Heart left ventricle (tissue), 16 donors: ENCODE measurements at regions of chr20 and their contacts with region 1.

Region 1: DNA sequence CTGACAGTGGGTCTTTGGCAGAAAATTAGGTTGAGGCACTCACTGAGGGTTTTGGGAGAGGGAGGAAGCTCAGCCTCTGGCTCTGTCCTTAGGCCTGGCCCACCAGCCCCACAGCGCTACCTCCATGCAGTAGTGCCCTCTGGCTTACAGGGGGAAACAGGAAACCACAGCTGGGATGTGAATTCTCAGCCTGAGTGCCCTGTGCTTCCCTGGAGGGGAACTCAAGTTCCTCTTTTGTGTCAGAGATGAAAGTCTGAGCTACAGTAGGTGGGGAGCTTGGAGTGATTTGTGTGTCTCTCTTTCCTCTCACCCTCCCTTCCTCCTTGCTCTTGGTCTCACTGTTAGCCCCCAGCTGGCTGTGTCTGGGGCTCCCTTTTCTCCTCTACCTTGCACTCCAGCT is 48.2 kb upstream of the BLCAP start:
- DNase-seq: no peak
- ATAC-seq: no peak
- H3K4me3 ChIP-seq: no peak overlapping the region
- H3K27ac ChIP-seq: no peak overlapping the region
- H3K4me1 ChIP-seq: no peaks in the 10 kb centered on the region
- H3K27me3 ChIP-seq: peaks cover 0 to 26% (median 1%) of the 10 kb centered on the region in 9 donors
- CTCF ChIP-seq: no peak
- POLR2A ChIP-seq: no peak

Region 2: DNA sequence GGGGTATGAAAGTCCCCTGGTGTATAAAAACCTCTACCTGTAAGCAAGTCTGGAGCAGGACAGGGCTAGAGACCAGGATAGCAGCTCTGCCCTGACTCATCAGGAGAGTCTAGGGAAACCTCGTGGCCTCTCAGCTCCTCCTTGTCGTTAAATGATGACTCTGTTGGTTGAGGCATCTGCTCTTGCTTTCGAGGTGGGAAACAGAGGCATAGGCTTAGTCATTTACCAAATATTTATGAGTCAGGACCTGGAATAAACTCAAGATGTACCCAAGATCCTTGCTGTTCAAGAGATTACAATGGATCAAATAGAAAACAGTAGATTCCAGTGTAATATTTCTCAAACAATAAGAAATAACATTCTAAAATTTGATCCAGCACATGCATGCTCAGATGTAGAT is 280.9 kb before region 1 on chr20:
- intact Hi-C with region 1: no loop called
- DNase-seq: no peak
- ATAC-seq: peak in 1 of 4 donors; percentile 53
- H3K4me3 ChIP-seq: no peak overlapping the region
- H3K27ac ChIP-seq: peak overlapping the region in 2 of 12 donors; percentile 81 to 87
- H3K4me1 ChIP-seq: peaks cover 0 to 88% (median 26%) of the 10 kb centered on the region in 12 donors
- H3K27me3 ChIP-seq: no peaks in the 10 kb centered on the region
- CTCF ChIP-seq: no peak
- POLR2A ChIP-seq: no peak

Region 3: GRCh38 chr20:37527638-37528441 is 48.0 kb before region 1 on chr20 and contains the start of gene BLCAP:
- intact Hi-C with region 1: no loop called
- DNase-seq: peak; percentile 90 to 96 (median 93)
- ATAC-seq: peak; percentile 86 to 93 (median 92)
- H3K4me3 ChIP-seq: peak within 1 kb of the TSS; percentile 76 to 100 (median 94)
- H3K27ac ChIP-seq: peak within 1 kb of the TSS; percentile 87 to 100 (median 98)
- H3K4me1 ChIP-seq: peaks cover 3 to 50% (median 40%) of the 10 kb centered on the region in 12 donors
- H3K27me3 ChIP-seq: no peaks in the 10 kb centered on the region
- CTCF ChIP-seq: no peak
- POLR2A ChIP-seq: peak; percentile 54 to 85
- total RNA-seq, gene BLCAP: 67.1 to 95.8 (median 81.7) TPM

Region 4: DNA sequence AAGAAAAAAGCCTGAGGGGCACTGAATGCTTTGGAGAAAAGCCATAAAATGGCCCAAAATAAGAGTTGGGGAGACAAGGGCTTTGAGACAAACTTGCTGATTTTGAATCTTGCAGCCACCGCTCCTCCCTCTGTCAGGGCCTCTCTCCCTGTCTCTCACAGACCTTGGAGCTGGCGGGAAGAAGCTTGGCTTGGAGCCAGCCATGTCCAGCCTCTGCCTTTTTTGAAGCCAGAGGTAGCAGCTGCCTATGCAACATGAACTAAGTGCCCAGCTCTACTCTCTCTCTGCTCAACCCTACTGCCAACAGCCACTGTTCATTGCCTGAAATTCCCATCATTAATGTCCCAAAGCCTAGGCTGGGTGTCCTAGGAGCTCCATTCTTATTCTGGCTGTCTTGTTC is 54.3 kb after region 1 on chr20:
- intact Hi-C with region 1: loop called in 1 of 10 experiments (anchors 10 kb)
- DNase-seq: no peak
- ATAC-seq: no peak
- H3K4me3 ChIP-seq: no peak overlapping the region
- H3K27ac ChIP-seq: no peak overlapping the region
- H3K4me1 ChIP-seq: peaks cover 0 to 7% (median 0%) of the 10 kb centered on the region in 12 donors
- H3K27me3 ChIP-seq: peaks cover 0 to 31% (median 3%) of the 10 kb centered on the region in 9 donors
- CTCF ChIP-seq: no peak
- POLR2A ChIP-seq: no peak

Region 5: DNA sequence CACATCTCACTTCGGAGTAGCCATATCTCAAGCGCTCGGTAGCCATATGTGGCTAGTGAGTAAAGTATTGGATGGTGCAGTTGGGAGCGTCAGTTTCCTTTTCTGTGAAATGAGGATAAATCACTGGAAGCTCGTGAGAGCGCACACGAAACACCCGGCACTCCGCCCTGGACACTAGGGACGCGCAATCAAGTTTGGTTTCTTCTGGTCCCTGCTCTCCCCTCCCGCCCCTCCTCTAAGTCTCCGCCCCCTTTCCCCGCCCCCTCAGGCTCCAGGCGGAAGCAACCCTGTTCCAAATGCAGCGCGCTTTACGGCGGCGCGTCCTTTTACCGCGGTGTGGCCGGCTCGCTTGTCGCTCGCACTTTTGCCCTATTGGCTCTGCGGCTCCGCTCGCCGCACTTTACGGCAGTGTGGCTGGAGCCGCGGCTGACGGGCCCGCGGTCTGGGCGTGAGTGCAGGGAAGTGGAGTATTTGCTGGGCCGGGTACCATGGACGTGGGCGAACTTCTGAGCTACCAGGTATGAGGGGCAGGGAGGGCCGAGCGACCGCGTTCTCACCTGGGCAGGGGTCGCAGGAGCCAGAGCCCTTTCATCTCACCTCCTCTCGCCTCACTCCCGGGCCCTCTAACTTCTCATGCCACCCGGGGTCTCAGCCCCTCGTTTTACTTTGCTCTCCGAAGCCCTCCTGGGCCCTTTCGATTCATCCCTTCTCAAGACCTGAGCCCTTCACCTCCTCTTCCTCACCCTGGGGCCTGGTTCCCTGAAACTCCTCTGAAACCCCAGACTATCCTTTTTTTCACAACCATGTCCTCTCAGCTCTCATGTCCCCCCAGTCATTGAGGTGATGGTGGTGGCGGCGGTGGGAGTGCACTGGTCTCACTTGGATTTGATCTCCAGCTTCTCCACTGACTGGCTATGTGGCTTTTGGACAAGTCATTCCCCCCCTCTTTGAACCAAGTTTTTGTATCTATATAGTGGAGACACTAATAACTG is 118.0 kb after region 1 on chr20 and contains the start of gene CTNNBL1:
- intact Hi-C with region 1: no loop called
- DNase-seq: peak; percentile 98 to 99 (median 99)
- ATAC-seq: peak; percentile 94 to 99 (median 99)
- H3K4me3 ChIP-seq: peak within 1 kb of the TSS; percentile 73 to 99 (median 84)
- H3K27ac ChIP-seq: peak within 1 kb of the TSS in 11 of 12 donors; percentile 47 to 86 (median 71)
- H3K4me1 ChIP-seq: peaks cover 0 to 37% (median 19%) of the 10 kb centered on the region in 12 donors
- H3K27me3 ChIP-seq: peaks cover 0 to 6% (median 0%) of the 10 kb centered on the region in 9 donors
- CTCF ChIP-seq: peak in 4 of 12 donors; percentile 9 to 25 (median 18)
- POLR2A ChIP-seq: peak in 1 of 2 donors; percentile 80
- total RNA-seq, gene CTNNBL1: 22.6 to 68.9 (median 50.5) TPM

Region 6: DNA sequence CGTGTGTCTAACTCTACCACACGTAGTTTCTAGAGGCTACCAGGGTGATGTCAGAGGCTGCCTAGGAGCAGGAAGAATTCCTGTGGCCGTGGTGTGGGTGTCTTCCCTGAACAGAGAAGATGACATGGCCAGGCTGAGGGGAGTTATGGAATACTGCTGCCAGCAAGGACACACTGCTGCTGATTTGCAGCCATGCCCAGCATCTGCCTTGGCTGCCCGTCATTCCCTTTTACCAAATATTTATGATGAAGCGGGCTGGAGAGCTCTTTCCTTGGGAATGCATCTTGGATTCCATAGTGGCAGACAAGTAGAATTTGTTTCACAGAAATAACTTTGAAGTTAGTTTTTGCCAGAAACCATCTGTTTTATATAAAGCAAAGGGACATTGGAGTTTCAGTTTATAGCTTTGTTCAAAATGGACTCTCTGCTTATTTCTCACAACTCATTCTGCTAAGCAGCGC is 246.3 kb after region 1 on chr20:
- intact Hi-C with region 1: loop called in 1 of 10 experiments (anchors 10 kb)
- DNase-seq: no peak
- ATAC-seq: no peak
- H3K4me3 ChIP-seq: no peak overlapping the region
- H3K27ac ChIP-seq: peak overlapping the region in 1 of 12 donors; percentile 56
- H3K4me1 ChIP-seq: no peaks in the 10 kb centered on the region
- H3K27me3 ChIP-seq: no peaks in the 10 kb centered on the region
- CTCF ChIP-seq: no peak
- POLR2A ChIP-seq: no peak